IMR-90 (cell line): ENCODE measurements at regions of chr14 and their contacts with region 1.

Region 1: DNA sequence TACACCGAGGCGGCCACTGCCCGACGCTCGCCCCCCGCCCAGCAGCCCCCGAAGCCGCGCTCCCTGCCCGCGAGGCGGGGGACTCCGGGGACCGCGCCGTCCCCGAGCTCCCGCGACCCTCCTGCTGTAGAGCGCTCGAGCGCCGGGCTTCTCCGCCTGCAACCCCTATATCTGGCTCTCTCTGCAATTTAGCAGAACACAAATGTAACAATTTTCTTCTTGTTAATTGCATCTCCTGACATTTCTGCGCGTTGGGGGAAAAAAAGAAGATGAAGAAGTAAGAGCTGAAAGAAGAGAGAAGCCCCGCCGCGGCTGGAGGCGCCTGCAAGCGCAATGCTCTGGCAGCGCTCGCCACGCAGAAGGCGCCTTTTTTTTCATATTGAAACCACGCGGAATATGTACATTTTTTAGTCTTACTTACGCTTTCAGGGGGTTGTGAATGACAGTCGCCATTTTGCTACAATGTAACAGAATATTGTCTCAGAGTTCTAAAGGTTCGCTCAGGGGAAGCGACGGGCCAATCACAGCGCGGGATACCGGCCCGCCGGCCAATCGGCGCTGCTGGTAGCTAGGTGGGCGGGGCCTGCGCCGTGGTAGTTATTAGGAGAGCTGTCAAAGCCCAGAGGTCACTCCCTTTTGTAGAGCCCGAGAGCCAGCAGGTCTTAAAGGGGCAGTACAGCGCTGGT is at the start of gene DPF3:
- DNase-seq: peak; percentile 96
- ATAC-seq: peak; percentile 95
- H3K4me3 ChIP-seq: peak within 1 kb of the TSS; percentile 76
- H3K27ac ChIP-seq: peak within 1 kb of the TSS; percentile 32
- H3K4me1 ChIP-seq: peaks cover 15% of the 10 kb centered on the region
- H3K27me3 ChIP-seq: no peaks in the 10 kb centered on the region
- CTCF ChIP-seq: no peak
- POLR2A ChIP-seq: no peak
- RAD21 ChIP-seq: no peak
- total RNA-seq, gene DPF3: 32.8 and 48.9 TPM in 2 replicates

Region 2: GRCh38 chr14:72516936-72517700 is 376.7 kb before region 1 on chr14:
- CTCF ChIA-PET with region 1: interaction called, 11 read pairs
- POLR2A ChIA-PET with region 1: no interaction called
- dilution Hi-C with region 1: no loop called
- in situ Hi-C with region 1: no loop called
- intact Hi-C with region 1: loop called (anchors 1 kb)
- DNase-seq: peak; percentile 91
- ATAC-seq: peak; percentile 88
- H3K4me3 ChIP-seq: no peak overlapping the region
- H3K27ac ChIP-seq: peak overlapping the region; percentile 35
- H3K4me1 ChIP-seq: peaks cover 7% of the 10 kb centered on the region
- H3K27me3 ChIP-seq: peaks cover 2% of the 10 kb centered on the region; the same call in 1 of the 2 replicates
- CTCF ChIP-seq: peak; percentile 98
- POLR2A ChIP-seq: peak; percentile 69
- RAD21 ChIP-seq: peak; percentile 99

Region 3: DNA sequence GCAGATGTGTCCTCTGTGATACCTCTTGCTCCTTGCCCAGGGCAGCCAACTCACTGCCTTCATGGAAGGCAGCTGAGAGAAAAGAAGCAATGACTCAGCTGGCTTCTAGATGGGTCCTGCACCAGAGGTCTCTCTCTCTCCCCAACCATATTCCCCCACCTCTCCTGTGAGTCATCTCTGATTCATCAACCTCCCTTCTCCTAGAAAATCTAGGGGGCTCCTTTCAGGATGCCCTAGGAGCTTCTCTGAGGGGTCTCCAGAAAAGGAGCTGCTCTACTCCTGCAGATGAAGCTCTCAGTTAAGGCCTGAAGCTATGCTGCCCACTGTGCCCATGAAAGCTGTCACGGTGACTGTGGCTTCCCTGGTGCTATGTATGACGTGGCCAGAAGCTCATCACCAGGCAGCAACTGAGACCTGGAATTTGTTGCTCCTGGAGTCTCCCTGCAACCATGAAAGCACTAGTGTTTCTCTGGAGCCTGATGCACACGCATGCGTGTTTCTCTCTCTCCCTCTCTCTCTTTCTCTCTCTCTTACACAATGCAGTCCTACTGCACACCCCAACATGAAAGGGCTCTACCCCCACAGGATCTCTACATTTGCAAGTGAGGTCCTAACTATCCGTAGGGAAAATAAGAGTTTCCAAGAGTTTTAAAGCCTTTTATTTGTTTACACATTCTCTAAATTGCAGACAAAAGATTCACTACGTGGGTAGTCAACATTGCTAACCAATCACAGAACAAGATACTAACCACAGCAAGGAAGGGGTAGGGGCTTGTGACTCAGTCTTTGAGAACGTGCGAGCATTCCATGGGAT is 285.2 kb before region 1 on chr14:
- CTCF ChIA-PET with region 1: no interaction called
- POLR2A ChIA-PET with region 1: no interaction called
- dilution Hi-C with region 1: no loop called
- in situ Hi-C with region 1: no loop called
- intact Hi-C with region 1: loop called (anchors 5 kb)
- DNase-seq: peak; percentile 97
- ATAC-seq: peak; percentile 76
- H3K4me3 ChIP-seq: no peak overlapping the region
- H3K27ac ChIP-seq: peak overlapping the region; percentile 95
- H3K4me1 ChIP-seq: peaks cover 27% of the 10 kb centered on the region
- H3K27me3 ChIP-seq: no peaks in the 10 kb centered on the region
- CTCF ChIP-seq: 0 out of 2 replicates have a peak, but pooled peaks have one; percentile 4
- POLR2A ChIP-seq: no peak
- RAD21 ChIP-seq: no peak; the same call in 1 of the 2 replicates

Region 4: GRCh38 chr14:72665259-72665658 is 228.5 kb before region 1 on chr14:
- CTCF ChIA-PET with region 1: no interaction called
- POLR2A ChIA-PET with region 1: no interaction called
- dilution Hi-C with region 1: no loop called
- in situ Hi-C with region 1: no loop called
- intact Hi-C with region 1: loop called (anchors 2 kb)
- DNase-seq: peak; percentile 100
- ATAC-seq: peak; percentile 87
- H3K4me3 ChIP-seq: peak overlapping the region; percentile 33; the same call in 1 of the 2 replicates
- H3K27ac ChIP-seq: peak overlapping the region; percentile 82
- H3K4me1 ChIP-seq: peaks cover 23% of the 10 kb centered on the region
- H3K27me3 ChIP-seq: no peaks in the 10 kb centered on the region
- CTCF ChIP-seq: no peak
- POLR2A ChIP-seq: no peak
- RAD21 ChIP-seq: 0 out of 2 replicates have a peak, but pooled peaks have one; percentile 11

Region 5: DNA sequence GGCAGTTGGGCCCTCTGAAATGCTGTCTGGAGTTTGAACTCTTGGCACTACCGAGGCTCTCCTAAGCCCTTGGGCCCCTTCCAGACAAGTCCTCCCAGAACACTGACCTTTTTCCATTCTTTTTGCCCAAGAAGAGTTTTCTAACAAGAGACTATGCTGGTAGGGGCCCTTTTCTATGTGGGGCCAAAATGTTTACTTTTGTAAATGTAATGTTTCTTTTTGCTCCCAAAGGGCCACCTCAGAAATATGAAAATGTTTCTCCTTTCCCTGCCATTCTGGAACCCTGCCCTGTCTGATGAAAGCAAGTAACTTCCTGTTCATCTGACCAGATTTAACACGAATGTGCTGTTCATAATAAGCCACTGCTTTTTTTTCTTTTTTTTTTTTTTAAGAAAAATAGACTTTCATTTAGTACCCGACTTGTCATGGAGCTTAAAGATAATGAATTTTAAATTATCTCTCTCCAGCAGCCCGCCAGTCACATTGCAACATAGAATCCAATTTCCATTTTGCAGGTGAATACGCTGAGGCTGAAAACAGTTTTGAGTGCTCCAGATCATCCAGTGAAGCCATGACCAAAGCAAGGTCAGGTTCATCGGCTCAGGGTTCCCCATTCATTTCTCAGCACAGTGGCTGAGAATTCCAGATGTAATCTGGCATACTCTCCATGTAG is 169.8 kb before region 1 on chr14:
- CTCF ChIA-PET with region 1: interaction called, 3 read pairs
- POLR2A ChIA-PET with region 1: no interaction called
- dilution Hi-C with region 1: no loop called
- in situ Hi-C with region 1: no loop called
- intact Hi-C with region 1: loop called (anchors 5 kb)
- DNase-seq: peak; percentile 44
- ATAC-seq: 0 out of 2 replicates have a peak, but pooled peaks have one; percentile 38
- H3K4me3 ChIP-seq: no peak overlapping the region
- H3K27ac ChIP-seq: peak overlapping the region; percentile 77; the same call in 1 of the 2 replicates
- H3K4me1 ChIP-seq: peaks cover 21% of the 10 kb centered on the region
- H3K27me3 ChIP-seq: no peaks in the 10 kb centered on the region
- CTCF ChIP-seq: no peak
- POLR2A ChIP-seq: no peak
- RAD21 ChIP-seq: no peak

Region 6: DNA sequence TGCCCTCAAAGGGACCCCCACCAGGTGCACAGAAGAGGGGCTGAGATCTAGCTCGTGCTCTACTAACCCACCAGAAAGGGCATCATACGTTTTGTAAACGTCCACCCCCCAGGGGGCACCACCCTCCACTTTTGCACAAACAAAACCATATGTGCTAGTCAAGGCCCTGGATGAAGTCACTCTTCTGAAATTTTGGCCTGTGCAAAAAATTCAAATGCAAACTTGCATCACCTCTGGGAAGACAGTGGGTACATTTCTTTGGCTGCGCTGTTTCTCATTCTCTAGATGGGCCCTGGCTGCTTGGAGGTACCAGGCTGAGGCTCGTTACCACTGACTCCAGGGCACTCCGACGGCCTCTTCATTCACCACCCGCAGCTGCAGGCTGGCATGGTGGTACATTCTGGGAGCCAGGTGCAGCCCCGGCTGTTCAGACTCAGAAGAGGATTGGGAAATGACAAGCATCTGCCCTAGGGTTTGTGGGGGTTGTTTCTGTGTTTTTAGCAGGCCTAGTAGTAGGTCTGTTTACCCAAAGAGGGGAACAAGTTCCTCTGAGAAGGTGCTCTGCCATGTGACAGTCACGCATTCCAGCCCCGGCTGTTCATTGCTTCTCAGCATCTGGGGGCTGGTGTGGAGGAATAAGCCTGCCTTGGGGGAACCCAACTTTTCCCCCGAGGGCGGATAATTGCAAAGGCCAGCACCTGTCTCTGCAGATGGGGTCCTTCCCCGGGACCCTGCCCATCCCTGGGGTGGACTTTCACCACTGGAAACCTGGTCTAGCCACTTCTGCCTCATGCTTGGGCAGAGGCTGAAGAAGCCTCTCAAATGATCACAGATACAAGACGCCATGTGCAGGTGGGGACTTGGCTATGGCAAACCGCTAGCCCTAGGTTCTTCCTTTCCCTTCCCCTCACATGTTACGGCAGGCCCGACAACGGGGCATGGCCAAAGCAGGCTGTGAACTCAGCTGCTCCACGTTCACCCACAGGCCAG is 147.5 kb before region 1 on chr14:
- CTCF ChIA-PET with region 1: no interaction called
- POLR2A ChIA-PET with region 1: no interaction called
- dilution Hi-C with region 1: no loop called
- in situ Hi-C with region 1: no loop called
- intact Hi-C with region 1: loop called (anchors 5 kb)
- DNase-seq: peak; percentile 84
- ATAC-seq: peak; percentile 74
- H3K4me3 ChIP-seq: no peak overlapping the region
- H3K27ac ChIP-seq: peak overlapping the region; percentile 78
- H3K4me1 ChIP-seq: peaks cover 26% of the 10 kb centered on the region
- H3K27me3 ChIP-seq: no peaks in the 10 kb centered on the region
- CTCF ChIP-seq: peak; percentile 40
- POLR2A ChIP-seq: no peak
- RAD21 ChIP-seq: peak; percentile 46

Region 7: GRCh38 chr14:72801381-72801812 is 92.4 kb before region 1 on chr14:
- CTCF ChIA-PET with region 1: no interaction called
- POLR2A ChIA-PET with region 1: no interaction called
- dilution Hi-C with region 1: no loop called
- in situ Hi-C with region 1: no loop called
- intact Hi-C with region 1: loop called (anchors 5 kb)
- DNase-seq: peak; percentile 99
- ATAC-seq: peak; percentile 89
- H3K4me3 ChIP-seq: no peak overlapping the region
- H3K27ac ChIP-seq: peak overlapping the region; percentile 62
- H3K4me1 ChIP-seq: peaks cover 23% of the 10 kb centered on the region
- H3K27me3 ChIP-seq: no peaks in the 10 kb centered on the region
- CTCF ChIP-seq: no peak
- POLR2A ChIP-seq: no peak
- RAD21 ChIP-seq: no peak

Region 8: GRCh38 chr14:72924292-72924691 is 30.5 kb after region 1 on chr14:
- CTCF ChIA-PET with region 1: no interaction called
- POLR2A ChIA-PET with region 1: no interaction called
- dilution Hi-C with region 1: no loop called
- in situ Hi-C with region 1: no loop called
- intact Hi-C with region 1: no loop called
- DNase-seq: no peak
- ATAC-seq: no peak
- H3K4me3 ChIP-seq: no peak overlapping the region
- H3K27ac ChIP-seq: no peak overlapping the region
- H3K4me1 ChIP-seq: no peaks in the 10 kb centered on the region
- H3K27me3 ChIP-seq: no peaks in the 10 kb centered on the region
- CTCF ChIP-seq: no peak
- POLR2A ChIP-seq: no peak
- RAD21 ChIP-seq: no peak